Dorsolateral prefrontal cortex (tissue), 120 donors: ENCODE measurements at regions of chr12 and their contacts with region 1.

Region 1: GRCh38 chr12:67433385-67434175 is 164.4 kb downstream of the CAND1 start:
- DNase-seq: no peak
- H3K4me3 ChIP-seq: no peak overlapping the region
- H3K27ac ChIP-seq: no peak overlapping the region
- H3K27me3 ChIP-seq: no peaks in the 10 kb centered on the region
- CTCF ChIP-seq: no peak

Region 2: DNA sequence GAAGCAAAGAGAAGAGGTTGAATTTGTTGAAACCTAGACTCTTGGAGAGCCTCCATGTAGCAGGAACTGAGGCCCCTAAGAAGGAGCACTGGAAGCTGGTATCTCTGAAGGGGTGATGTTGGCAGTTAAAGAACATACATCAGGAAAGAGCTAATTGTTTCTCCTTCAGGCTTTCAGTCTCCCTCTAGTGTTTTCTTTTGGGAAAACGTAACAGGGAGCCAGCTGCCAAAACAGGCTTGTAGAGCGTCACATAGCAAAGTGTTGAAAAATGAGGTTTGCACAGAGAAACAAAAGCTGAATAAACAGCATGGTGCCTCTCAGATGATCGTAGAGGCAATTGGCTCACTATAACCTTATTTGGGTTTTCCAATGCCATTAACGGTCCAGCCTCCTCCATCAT is 211.3 kb before region 1 on chr12:
- intact Hi-C with region 1: no loop called
- DNase-seq: no peak
- H3K4me3 ChIP-seq: no peak overlapping the region
- H3K27ac ChIP-seq: no peak overlapping the region
- H3K27me3 ChIP-seq: no peaks in the 10 kb centered on the region
- CTCF ChIP-seq: peak in 38 of 56 donors; percentile 10 to 52 (median 30)

Region 3: DNA sequence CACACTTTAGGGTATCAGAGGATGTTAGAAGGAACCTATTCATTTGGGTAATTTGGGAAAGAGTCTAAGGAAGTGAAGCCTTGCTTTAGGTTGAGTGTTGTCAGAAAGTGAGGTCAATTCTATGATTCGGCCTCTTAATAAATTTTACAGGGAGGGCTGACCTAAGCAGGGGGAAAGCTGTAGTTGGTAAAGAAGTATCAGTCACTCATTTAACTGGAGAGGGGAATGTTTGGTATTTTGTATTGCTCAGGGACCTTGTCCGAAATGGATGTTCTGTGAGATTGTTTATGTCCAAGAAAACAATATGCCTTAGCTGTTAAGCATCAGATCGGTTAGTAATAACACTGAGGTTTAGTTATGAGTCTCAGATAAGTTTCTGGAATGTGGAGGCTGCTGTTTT is 157.2 kb before region 1 on chr12:
- intact Hi-C with region 1: no loop called
- DNase-seq: no peak
- H3K4me3 ChIP-seq: no peak overlapping the region
- H3K27ac ChIP-seq: peak overlapping the region in 1 of 59 donors; percentile 2
- H3K27me3 ChIP-seq: no peaks in the 10 kb centered on the region
- CTCF ChIP-seq: no peak

Region 4: GRCh38 chr12:67498991-67499390 is 65.4 kb after region 1 on chr12:
- intact Hi-C with region 1: no loop called
- DNase-seq: peak in 2 of 10 donors; percentile 37 to 55
- H3K4me3 ChIP-seq: no peak overlapping the region
- H3K27ac ChIP-seq: no peak overlapping the region
- H3K27me3 ChIP-seq: no peaks in the 10 kb centered on the region
- CTCF ChIP-seq: no peak

Region 5: GRCh38 chr12:67772276-67773169 is 338.9 kb after region 1 on chr12:
- intact Hi-C with region 1: no loop called
- DNase-seq: peak in 2 of 10 donors; percentile 6 to 16
- H3K4me3 ChIP-seq: peak overlapping the region in 4 of 59 donors; percentile 4 to 33 (median 8)
- H3K27ac ChIP-seq: peak overlapping the region in 29 of 59 donors; percentile 9 to 81 (median 41)
- H3K27me3 ChIP-seq: no peaks in the 10 kb centered on the region
- CTCF ChIP-seq: no peak

Region 6: GRCh38 chr12:67937836-67938235 is 504.3 kb after region 1 on chr12:
- intact Hi-C with region 1: loop called (anchors 5 to 10 kb)
- DNase-seq: no peak
- H3K4me3 ChIP-seq: no peak overlapping the region
- H3K27ac ChIP-seq: no peak overlapping the region
- H3K27me3 ChIP-seq: peaks cover 0 to 3% (median 0%) of the 10 kb centered on the region in 45 donors
- CTCF ChIP-seq: no peak